ENCODE measurements at regions of chr10 and their contacts with region 1.

Region 1: GRCh38 chr10:100923580-100923979 is 10.8 kb downstream of the SLF2 start:
- DNase-seq: no peak
- H3K4me3 ChIP-seq: no peak overlapping the region
- CTCF ChIP-seq: no peak
- POLR2A ChIP-seq: no peak

Region 2: DNA sequence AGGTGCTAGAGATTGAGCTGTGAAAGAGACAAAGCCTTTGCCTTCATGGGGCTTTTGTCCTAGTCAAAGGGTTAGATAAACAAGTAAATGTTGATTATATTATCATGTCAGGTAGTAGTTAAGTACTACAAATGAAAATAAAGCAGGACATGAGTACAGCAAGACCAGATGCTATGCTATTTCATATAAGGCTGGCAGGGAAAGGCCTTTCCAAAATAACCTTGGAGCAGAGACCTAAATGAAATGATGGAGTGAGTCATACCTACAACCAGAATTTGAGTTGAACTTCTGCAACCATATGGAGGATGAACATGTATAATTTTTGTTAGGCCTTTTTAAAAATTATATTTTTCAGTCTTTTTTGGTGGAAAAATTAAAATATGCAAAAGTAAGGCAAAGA is 22.2 kb after region 1 on chr10:
- intact Hi-C with region 1: no loop called
- DNase-seq: no peak
- H3K4me3 ChIP-seq: no peak overlapping the region
- CTCF ChIP-seq: no peak
- POLR2A ChIP-seq: no peak

Region 3: DNA sequence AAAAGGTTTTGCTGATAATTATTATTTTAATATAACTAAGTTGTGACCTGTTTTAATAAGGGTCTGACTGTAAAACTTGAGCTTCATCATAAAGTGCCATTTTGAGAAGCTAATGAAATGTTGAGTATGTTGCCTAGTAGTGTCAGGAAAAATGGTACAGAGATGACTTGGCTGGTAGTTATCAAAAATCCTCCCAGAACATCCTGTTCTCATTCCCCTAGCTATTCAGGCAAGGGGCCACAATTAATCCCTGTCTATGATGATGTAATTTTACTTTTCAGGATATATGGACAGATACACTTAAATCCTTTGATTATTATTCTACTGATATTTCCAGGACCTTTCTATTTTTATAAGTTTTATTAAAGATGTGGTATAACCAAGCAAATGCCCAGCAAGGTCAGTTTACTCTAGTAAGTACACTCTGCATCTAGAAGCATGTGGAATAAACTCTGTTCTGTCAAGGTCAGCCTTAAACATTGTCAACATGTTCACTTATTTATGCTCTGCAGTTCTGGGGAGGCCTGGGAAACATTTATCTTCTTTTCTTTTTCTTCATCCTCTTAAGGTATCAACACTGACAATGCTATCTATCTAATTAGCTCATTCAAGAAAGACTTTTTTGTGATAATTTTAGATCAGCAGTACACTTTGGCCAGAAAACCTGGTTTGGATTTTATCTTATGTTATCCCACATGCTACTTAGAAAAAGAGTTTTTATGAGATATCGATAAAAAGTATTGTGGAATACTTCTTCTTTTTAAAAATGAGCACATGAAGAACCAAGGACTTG is 462.5 kb after region 1 on chr10:
- intact Hi-C with region 1: loop called (anchors 5 kb)
- DNase-seq: no peak
- H3K4me3 ChIP-seq: no peak overlapping the region
- CTCF ChIP-seq: no peak
- POLR2A ChIP-seq: no peak